ENCODE measurements at regions of chr4 and their contacts with region 1.

Region 1: GRCh38 chr4:127364397-127364796 is 268.4 kb upstream of the INTU start:
- DNase-seq: no peak
- H3K4me3 ChIP-seq: no peak overlapping the region
- H3K27ac ChIP-seq: no peak overlapping the region
- H3K4me1 ChIP-seq: no peaks in the 10 kb centered on the region
- H3K27me3 ChIP-seq: no peaks in the 10 kb centered on the region
- CTCF ChIP-seq: no peak

Region 2: DNA sequence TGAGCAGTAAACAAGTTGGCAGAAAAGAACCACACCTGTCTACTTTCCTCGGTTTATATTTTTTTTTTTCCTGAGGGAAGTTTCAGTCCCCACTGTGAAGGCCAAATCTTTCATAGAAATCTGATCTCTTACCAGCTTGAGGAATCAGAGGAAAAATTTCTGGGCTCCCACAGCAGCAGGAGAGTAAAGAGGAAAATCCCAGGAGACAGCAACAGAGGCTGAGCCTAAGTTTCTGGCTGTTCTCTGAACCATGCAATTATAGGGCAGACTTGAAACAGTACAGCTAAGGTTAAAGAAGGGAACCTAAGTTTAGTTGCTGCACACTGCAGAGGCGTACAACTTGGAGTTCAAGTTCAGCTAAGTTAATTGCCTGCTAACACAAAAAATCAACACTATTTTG is 822.6 kb before region 1 on chr4:
- CTCF ChIA-PET with region 1: no interaction called
- POLR2A ChIA-PET with region 1: interaction called, 12 read pairs
- intact Hi-C with region 1: no loop called
- DNase-seq: no peak
- H3K4me3 ChIP-seq: no peak overlapping the region
- H3K27ac ChIP-seq: no peak overlapping the region
- H3K4me1 ChIP-seq: no peaks in the 10 kb centered on the region
- H3K27me3 ChIP-seq: no peaks in the 10 kb centered on the region
- CTCF ChIP-seq: no peak

Region 3: GRCh38 chr4:127155116-127155515 is 209.3 kb before region 1 on chr4:
- CTCF ChIA-PET with region 1: no interaction called
- POLR2A ChIA-PET with region 1: no interaction called
- intact Hi-C with region 1: no loop called
- DNase-seq: no peak
- H3K4me3 ChIP-seq: no peak overlapping the region
- H3K27ac ChIP-seq: no peak overlapping the region
- H3K4me1 ChIP-seq: no peaks in the 10 kb centered on the region
- H3K27me3 ChIP-seq: no peaks in the 10 kb centered on the region
- CTCF ChIP-seq: no peak

Region 4: GRCh38 chr4:127352220-127353113 is 11.9 kb before region 1 on chr4:
- CTCF ChIA-PET with region 1: no interaction called
- POLR2A ChIA-PET with region 1: no interaction called
- intact Hi-C with region 1: no loop called
- DNase-seq: no peak
- H3K4me3 ChIP-seq: no peak overlapping the region
- H3K27ac ChIP-seq: no peak overlapping the region
- H3K4me1 ChIP-seq: no peaks in the 10 kb centered on the region
- H3K27me3 ChIP-seq: no peaks in the 10 kb centered on the region
- CTCF ChIP-seq: no peak

Region 5: DNA sequence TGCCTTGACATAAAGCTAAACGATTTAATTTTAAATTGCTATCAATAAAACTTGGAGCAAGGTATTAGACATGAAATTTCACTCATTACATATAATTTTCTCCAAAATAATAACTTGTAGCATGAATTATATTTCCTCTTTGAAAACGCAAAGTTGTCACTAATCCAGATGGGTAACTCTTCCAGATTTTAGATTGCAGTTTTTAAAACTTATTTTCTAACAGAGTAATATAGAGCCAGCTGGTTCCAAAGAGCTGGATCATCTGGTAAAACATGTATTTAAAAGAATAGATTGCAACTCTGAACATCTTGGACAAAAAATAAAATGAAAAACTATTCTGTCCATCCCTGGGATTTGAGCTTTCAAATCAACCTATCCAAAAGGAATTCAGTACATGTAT is 30.1 kb after region 1 on chr4:
- CTCF ChIA-PET with region 1: no interaction called
- POLR2A ChIA-PET with region 1: no interaction called
- intact Hi-C with region 1: no loop called
- DNase-seq: no peak
- H3K4me3 ChIP-seq: no peak overlapping the region
- H3K27ac ChIP-seq: no peak overlapping the region
- H3K4me1 ChIP-seq: no peaks in the 10 kb centered on the region
- H3K27me3 ChIP-seq: no peaks in the 10 kb centered on the region
- CTCF ChIP-seq: no peak

Region 6: DNA sequence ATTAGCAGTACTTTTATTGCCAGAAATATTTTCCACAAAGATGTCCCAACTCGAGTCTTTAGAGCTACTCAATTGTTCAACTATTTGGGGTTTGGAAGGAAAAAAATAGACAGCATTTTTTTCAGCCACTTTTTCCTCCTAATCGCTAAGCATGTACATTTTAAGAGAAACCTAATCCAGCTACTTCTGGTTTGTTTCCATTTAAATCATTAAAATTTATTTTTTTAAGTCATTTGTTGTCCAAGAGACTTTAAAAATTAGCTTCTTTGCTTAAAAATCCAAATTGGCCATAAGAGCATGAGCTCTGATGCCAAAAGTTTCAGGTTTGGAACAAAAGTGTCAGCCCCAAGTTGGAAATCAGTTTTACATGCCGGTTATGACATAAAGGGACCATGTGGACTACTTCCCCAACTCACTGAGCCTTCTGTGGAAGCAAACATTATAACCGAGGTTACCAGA is 82.1 kb after region 1 on chr4:
- CTCF ChIA-PET with region 1: no interaction called
- POLR2A ChIA-PET with region 1: no interaction called
- intact Hi-C with region 1: no loop called
- DNase-seq: no peak
- H3K4me3 ChIP-seq: no peak overlapping the region
- H3K27ac ChIP-seq: no peak overlapping the region
- H3K4me1 ChIP-seq: no peaks in the 10 kb centered on the region
- H3K27me3 ChIP-seq: no peaks in the 10 kb centered on the region
- CTCF ChIP-seq: no peak